ENCODE measurements at regions of chr18 and their contacts with region 1.

Region 1: DNA sequence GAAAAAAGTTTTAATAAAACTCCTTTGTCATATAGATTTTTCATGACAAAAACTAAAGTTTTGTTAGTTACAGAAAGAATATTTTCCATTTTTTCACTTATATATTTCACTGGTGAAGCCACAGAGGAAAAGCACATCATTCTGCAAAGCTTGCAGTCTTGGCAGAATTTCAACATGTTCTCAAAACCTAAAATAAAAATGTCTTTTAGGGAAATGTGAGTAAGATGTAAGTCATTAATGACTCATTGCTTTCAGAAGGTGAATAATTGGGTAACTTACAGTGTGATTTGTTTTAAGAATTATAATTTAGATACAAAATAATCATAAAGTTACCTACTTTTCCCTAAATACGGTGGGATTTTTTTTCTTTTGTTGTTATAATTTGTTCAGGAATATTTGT is 43.4 kb upstream of the TNFRSF11A start:
- DNase-seq: no peak
- ATAC-seq: no peak
- H3K4me3 ChIP-seq: no peak overlapping the region
- H3K27ac ChIP-seq: no peak overlapping the region
- H3K4me1 ChIP-seq: peaks cover 5 to 11% of the 10 kb centered on the region in 2 donors
- H3K27me3 ChIP-seq: no peaks in the 10 kb centered on the region
- CTCF ChIP-seq: no peak
- POLR2A ChIP-seq: no peak

Region 2: DNA sequence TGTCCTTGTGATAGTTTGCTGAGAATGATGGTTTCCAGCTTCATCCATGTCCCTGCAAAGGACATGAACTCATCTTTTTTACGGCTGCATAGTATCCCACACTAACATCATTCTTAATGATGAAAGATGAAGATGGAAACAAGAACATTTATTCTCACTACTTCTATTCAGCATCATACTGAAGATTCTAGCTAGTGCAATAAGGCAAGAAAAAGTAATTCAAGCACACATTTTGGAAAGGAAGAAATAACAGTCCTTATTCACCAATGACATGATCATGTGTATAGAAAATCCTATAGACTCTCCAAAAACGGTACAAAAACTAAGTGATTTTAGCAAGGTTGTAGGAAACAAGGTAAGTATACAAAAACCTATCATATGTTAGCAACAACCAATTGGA is 57.5 kb before region 1 on chr18:
- in situ Hi-C with region 1: no loop called
- intact Hi-C with region 1: no loop called
- DNase-seq: no peak
- ATAC-seq: no peak
- H3K4me3 ChIP-seq: no peak overlapping the region
- H3K27ac ChIP-seq: no peak overlapping the region
- H3K4me1 ChIP-seq: no peaks in the 10 kb centered on the region
- H3K27me3 ChIP-seq: no peaks in the 10 kb centered on the region
- CTCF ChIP-seq: no peak
- POLR2A ChIP-seq: no peak

Region 3: GRCh38 chr18:62566199-62566598 is 284.5 kb after region 1 on chr18:
- in situ Hi-C with region 1: loop called in 1 of 4 experiments (anchors 25 kb)
- intact Hi-C with region 1: no loop called
- DNase-seq: peak; percentile 40 to 70
- ATAC-seq: peak; percentile 68 to 91
- H3K4me3 ChIP-seq: no peak overlapping the region
- H3K27ac ChIP-seq: peak overlapping the region in 1 of 4 donors; percentile 19
- H3K4me1 ChIP-seq: no peaks in the 10 kb centered on the region
- H3K27me3 ChIP-seq: no peaks in the 10 kb centered on the region
- CTCF ChIP-seq: peak; percentile 15 to 45 (median 39)
- POLR2A ChIP-seq: no peak